Activated CD8-positive, alpha-beta T cell treated with anti-CD3 and anti-CD28 coated beads for 36 hours (primary cell): ENCODE measurements at regions of chr9 and their contacts with region 1.

Region 1: DNA sequence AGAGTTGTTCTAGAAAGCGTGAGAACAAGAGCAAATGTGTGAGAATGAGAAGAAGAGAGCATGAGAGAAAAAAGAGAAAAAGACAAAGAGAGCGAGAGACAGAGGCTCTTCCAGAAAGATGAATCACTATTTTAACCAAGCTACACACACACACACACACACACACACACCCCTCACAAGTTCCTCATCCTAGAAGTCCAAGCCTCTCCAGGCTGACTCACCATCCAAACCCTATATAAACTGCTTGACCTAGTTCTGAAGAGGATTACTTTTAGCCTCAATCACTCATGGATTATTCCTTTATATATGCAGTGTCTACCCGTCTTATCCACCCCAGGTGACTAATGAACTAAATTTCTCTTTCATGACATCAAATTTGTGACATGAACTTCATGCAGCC is 37.6 kb downstream of the C9orf57 start:
- DNase-seq: no peak
- ATAC-seq: no peak
- H3K4me3 Mint-ChIP-seq: no peak overlapping the region
- H3K27ac Mint-ChIP-seq: no peak overlapping the region
- H3K4me1 Mint-ChIP-seq: no peaks in the 10 kb centered on the region
- H3K27me3 Mint-ChIP-seq: no peaks in the 10 kb centered on the region
- CTCF ChIP-seq: no peak

Region 2: DNA sequence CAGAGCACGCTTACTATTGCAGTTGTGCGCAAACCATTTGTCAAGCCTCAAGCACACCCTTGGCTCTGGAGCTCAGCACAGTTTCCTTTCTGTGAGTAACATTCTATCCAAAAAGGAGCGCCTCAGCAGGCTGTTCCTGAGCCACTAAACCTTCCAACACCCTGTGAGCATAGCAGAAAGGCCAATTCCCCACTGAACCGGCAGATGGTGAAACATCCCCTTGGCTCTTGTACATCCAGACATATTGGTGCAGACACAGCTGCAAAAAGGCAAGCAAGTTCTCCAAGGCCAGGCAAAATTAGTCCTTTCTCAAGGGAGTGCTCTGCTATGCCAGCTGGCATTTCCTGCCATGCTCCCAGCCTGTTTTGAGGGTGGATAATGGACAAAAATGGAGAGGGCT is 210.5 kb before region 1 on chr9:
- CTCF ChIA-PET with region 1: interaction called, 177 read pairs
- POLR2A ChIA-PET with region 1: no interaction called
- intact Hi-C with region 1: no loop called
- DNase-seq: no peak
- ATAC-seq: no peak
- H3K4me3 Mint-ChIP-seq: no peak overlapping the region
- H3K27ac Mint-ChIP-seq: no peak overlapping the region
- H3K4me1 Mint-ChIP-seq: peaks cover 12% of the 10 kb centered on the region
- H3K27me3 Mint-ChIP-seq: no peaks in the 10 kb centered on the region
- CTCF ChIP-seq: no peak